ENCODE measurements at regions of chr17 and their contacts with region 1.

Region 1: GRCh38 chr17:11997147-11997846 is at the start of gene ZNF18:
- DNase-seq: peak; percentile 95 to 96
- ATAC-seq: peak; percentile 94 to 99
- H3K4me3 ChIP-seq: peak within 1 kb of the TSS; percentile 70
- H3K27ac ChIP-seq: peak within 1 kb of the TSS; percentile 88 to 94
- H3K4me1 ChIP-seq: peaks cover 8% of the 10 kb centered on the region
- CTCF ChIP-seq: no peak
- EP300 ChIP-seq: no peak
- POLR2A ChIP-seq: peak; percentile 100
- RAD21 ChIP-seq: 0 out of 5 replicates have a peak, but pooled peaks of 1 of the 2 experiments have one; percentile 16
- polyA plus RNA-seq, gene ZNF18: 12.3 and 12.6 TPM in 2 replicates

Region 2: GRCh38 chr17:11948789-11949188 is 48.5 kb before region 1 on chr17:
- CTCF ChIA-PET with region 1: no interaction called
- POLR2A ChIA-PET with region 1: interaction called, 14 read pairs
- DNase-seq: peak in 1 of 2 experiments; percentile 22
- ATAC-seq: peak; percentile 64 to 73
- H3K4me3 ChIP-seq: no peak overlapping the region
- H3K27ac ChIP-seq: no peak overlapping the region
- H3K4me1 ChIP-seq: peaks cover 6% of the 10 kb centered on the region; the same call in 1 of the 3 replicates
- CTCF ChIP-seq: no peak
- EP300 ChIP-seq: no peak
- POLR2A ChIP-seq: no peak
- RAD21 ChIP-seq: no peak

Region 3: GRCh38 chr17:11986942-11987329 is 10.4 kb before region 1 on chr17:
- CTCF ChIA-PET with region 1: interaction called, 24 read pairs
- POLR2A ChIA-PET with region 1: interaction called, 15 read pairs
- DNase-seq: peak; percentile 49 to 66
- ATAC-seq: peak; percentile 74 to 84; a peak in 5 of 6 replicates
- H3K4me3 ChIP-seq: no peak overlapping the region
- H3K27ac ChIP-seq: no peak overlapping the region
- H3K4me1 ChIP-seq: no peaks in the 10 kb centered on the region
- CTCF ChIP-seq: peak; percentile 79
- EP300 ChIP-seq: no peak
- POLR2A ChIP-seq: no peak
- RAD21 ChIP-seq: peak; percentile 73 to 82

Region 4: DNA sequence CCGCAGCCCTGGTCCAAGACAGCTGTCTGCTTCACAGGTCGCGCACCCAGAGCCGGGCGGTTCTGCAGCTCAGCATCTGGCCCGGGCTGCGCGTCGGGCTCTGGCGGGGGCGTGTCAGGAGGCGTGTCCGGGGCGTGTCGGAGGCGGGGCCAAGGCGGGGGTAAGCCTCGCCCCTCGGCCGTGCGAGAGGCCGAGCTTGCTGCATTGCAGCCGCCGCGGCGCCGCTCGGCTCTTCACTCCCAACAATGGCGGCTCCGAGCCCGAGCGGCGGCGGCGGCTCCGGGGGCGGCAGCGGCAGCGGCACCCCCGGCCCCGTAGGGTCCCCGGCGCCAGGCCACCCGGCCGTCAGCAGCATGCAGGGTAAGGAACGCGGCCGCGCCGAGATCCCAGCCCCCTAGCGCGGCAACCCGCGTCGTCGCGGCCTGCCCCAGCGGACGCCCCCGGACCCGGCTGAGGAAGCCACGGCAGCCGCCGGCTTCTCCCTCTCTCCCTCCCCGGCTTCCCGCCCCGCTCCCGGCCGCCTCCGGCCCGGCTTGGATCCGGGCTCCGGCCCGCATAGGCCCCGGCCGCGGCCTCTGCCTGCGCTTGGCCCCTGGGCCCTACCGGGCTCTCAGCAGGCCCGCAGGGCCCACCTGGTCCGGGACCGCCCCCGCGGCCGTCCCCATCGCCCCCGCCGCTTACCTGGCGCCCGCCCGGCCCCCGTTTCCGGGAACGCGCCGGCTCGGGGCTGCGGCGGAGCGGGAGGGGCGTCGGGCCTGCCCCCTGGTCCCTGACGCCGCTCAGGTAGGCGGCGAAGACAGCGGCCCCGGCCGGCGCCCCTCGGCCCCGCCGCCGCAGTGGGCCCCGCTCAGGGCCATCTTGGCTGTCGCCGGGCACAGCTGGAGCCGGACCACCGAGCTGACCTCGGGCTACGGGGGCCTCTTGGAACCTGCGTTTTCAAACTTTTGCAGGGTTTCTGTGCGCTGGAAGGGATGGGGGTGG is 23.6 kb after region 1 on chr17 and contains the start of gene MAP2K4:
- CTCF ChIA-PET with region 1: interaction called, 4 read pairs
- POLR2A ChIA-PET with region 1: interaction called, 217 read pairs
- DNase-seq: peak; percentile 86 to 91
- ATAC-seq: peak; percentile 93 to 98
- H3K4me3 ChIP-seq: peak within 1 kb of the TSS; percentile 93
- H3K27ac ChIP-seq: peak within 1 kb of the TSS; percentile 87 to 98
- H3K4me1 ChIP-seq: peaks cover 42% of the 10 kb centered on the region
- CTCF ChIP-seq: no peak
- EP300 ChIP-seq: no peak
- POLR2A ChIP-seq: peak; percentile 90
- RAD21 ChIP-seq: no peak; a peak in 1 of 5 replicates
- polyA plus RNA-seq, gene MAP2K4: 47.7 and 49.7 TPM in 2 replicates

Region 5: GRCh38 chr17:12047681-12048376 is 50.5 kb after region 1 on chr17:
- CTCF ChIA-PET with region 1: no interaction called
- POLR2A ChIA-PET with region 1: interaction called, 13 read pairs
- DNase-seq: peak in 1 of 2 experiments; percentile 19
- ATAC-seq: peak in 1 of 2 experiments; percentile 33; a peak in 2 of 6 replicates
- H3K4me3 ChIP-seq: no peak overlapping the region
- H3K27ac ChIP-seq: no peak overlapping the region
- H3K4me1 ChIP-seq: peaks cover 20% of the 10 kb centered on the region
- CTCF ChIP-seq: no peak
- EP300 ChIP-seq: no peak
- POLR2A ChIP-seq: no peak
- RAD21 ChIP-seq: no peak

Region 6: DNA sequence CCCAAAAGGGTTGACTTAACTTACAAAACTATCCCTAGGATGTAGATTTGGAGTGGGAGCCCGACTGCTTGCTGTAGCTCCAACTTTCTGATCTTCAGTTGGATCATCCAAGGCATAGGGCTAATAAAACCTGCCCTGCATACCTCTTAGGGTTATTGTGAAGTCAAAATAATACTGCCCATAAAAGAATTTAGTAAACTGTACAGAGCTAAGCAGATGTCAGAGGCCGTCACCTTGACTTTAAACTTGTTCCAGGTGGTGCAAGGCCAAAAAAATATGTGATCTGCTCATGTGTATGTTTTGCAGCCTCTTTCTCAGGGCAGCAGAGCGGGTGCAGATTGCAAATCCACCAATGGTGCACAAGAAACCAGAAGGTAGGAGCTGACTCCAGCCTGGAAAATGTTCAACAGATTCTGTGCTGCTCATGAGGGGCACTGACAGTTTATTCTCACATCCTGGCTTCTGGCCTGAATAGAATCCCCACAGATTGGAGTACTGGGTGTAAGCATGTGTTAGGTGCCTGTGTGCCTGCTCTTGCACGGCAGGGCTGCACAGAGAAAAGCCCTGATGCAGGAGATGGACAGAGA is 204.1 kb after region 1 on chr17:
- CTCF ChIA-PET with region 1: no interaction called
- POLR2A ChIA-PET with region 1: no interaction called
- DNase-seq: no peak
- ATAC-seq: peak in 1 of 2 experiments; percentile 30; a peak in 2 of 6 replicates
- H3K4me3 ChIP-seq: no peak overlapping the region
- H3K27ac ChIP-seq: no peak overlapping the region
- H3K4me1 ChIP-seq: no peaks in the 10 kb centered on the region
- CTCF ChIP-seq: no peak
- EP300 ChIP-seq: no peak
- POLR2A ChIP-seq: no peak
- RAD21 ChIP-seq: no peak

Region 7: GRCh38 chr17:12250973-12251372 is 253.7 kb after region 1 on chr17:
- CTCF ChIA-PET with region 1: no interaction called
- POLR2A ChIA-PET with region 1: no interaction called
- DNase-seq: no peak
- ATAC-seq: no peak
- H3K4me3 ChIP-seq: no peak overlapping the region
- H3K27ac ChIP-seq: no peak overlapping the region
- H3K4me1 ChIP-seq: no peaks in the 10 kb centered on the region
- CTCF ChIP-seq: no peak
- EP300 ChIP-seq: no peak
- POLR2A ChIP-seq: no peak
- RAD21 ChIP-seq: no peak